A673 (cell line): ENCODE measurements at regions of chr10 and their contacts with region 1.

Region 1: GRCh38 chr10:12129222-12130111 is at the start of gene SEC61A2:
- DNase-seq: peak; percentile 94
- H3K4me3 ChIP-seq: peak within 1 kb of the TSS; percentile 70
- H3K27ac ChIP-seq: peak within 1 kb of the TSS; percentile 86
- H3K4me1 ChIP-seq: no peaks in the 10 kb centered on the region
- H3K27me3 ChIP-seq: no peaks in the 10 kb centered on the region
- CTCF ChIP-seq: no peak
- total RNA-seq, gene SEC61A2: 17.2 and 22.8 TPM in 2 replicates

Region 2: GRCh38 chr10:11853468-11853867 is 276.0 kb before region 1 on chr10:
- CTCF ChIA-PET with region 1: no interaction called
- POLR2A ChIA-PET with region 1: no interaction called
- intact Hi-C with region 1: no loop called
- DNase-seq: no peak
- H3K4me3 ChIP-seq: no peak overlapping the region
- H3K27ac ChIP-seq: no peak overlapping the region
- H3K4me1 ChIP-seq: no peaks in the 10 kb centered on the region
- H3K27me3 ChIP-seq: no peaks in the 10 kb centered on the region
- CTCF ChIP-seq: peak; percentile 37

Region 3: DNA sequence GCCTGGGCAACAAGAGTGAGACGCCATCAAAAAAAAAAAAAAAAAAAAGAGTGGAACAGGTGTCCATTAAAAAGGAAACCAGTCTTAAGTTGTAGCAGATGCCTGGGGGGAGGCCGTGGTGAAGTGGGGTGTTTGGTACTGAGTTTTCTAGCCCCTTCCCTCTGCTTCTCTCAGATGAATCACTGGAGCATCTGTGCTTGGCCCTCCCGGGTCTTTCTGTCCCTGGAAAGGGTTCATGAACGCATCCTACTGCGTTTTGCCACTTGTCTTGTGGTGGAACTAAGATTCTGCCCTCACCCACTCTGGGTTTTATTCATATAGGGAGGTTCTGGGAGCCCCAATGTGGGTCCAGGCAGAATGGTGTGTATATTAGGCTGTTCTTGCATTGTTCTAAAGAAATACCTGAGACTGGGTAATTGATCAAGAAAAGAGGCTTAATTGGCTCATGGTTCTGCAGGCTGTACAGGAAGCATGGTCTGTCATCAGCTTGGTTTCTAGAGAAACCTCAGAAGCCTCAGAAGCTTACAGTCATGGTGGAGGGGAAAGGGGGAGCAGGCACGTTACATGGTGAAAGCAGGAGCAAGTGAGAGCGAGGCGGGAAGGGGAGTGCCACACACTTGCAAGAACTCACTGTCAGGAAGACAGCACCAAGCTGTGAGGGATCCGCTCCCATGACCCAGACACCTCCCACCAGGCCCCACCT is 283.4 kb after region 1 on chr10:
- CTCF ChIA-PET with region 1: no interaction called
- POLR2A ChIA-PET with region 1: no interaction called
- intact Hi-C with region 1: no loop called
- DNase-seq: no peak
- H3K4me3 ChIP-seq: no peak overlapping the region
- H3K27ac ChIP-seq: no peak overlapping the region
- H3K4me1 ChIP-seq: no peaks in the 10 kb centered on the region
- H3K27me3 ChIP-seq: no peaks in the 10 kb centered on the region
- CTCF ChIP-seq: no peak

Region 4: GRCh38 chr10:13322615-13323148 is 1193.2 kb after region 1 on chr10:
- CTCF ChIA-PET with region 1: no interaction called
- POLR2A ChIA-PET with region 1: interaction called, 10 read pairs
- intact Hi-C with region 1: no loop called
- DNase-seq: no peak
- H3K4me3 ChIP-seq: no peak overlapping the region
- H3K27ac ChIP-seq: no peak overlapping the region
- H3K4me1 ChIP-seq: no peaks in the 10 kb centered on the region
- H3K27me3 ChIP-seq: no peaks in the 10 kb centered on the region
- CTCF ChIP-seq: no peak